HAP-1 (cell line): ENCODE measurements at regions of chr14 and their contacts with region 1.

Region 1: DNA sequence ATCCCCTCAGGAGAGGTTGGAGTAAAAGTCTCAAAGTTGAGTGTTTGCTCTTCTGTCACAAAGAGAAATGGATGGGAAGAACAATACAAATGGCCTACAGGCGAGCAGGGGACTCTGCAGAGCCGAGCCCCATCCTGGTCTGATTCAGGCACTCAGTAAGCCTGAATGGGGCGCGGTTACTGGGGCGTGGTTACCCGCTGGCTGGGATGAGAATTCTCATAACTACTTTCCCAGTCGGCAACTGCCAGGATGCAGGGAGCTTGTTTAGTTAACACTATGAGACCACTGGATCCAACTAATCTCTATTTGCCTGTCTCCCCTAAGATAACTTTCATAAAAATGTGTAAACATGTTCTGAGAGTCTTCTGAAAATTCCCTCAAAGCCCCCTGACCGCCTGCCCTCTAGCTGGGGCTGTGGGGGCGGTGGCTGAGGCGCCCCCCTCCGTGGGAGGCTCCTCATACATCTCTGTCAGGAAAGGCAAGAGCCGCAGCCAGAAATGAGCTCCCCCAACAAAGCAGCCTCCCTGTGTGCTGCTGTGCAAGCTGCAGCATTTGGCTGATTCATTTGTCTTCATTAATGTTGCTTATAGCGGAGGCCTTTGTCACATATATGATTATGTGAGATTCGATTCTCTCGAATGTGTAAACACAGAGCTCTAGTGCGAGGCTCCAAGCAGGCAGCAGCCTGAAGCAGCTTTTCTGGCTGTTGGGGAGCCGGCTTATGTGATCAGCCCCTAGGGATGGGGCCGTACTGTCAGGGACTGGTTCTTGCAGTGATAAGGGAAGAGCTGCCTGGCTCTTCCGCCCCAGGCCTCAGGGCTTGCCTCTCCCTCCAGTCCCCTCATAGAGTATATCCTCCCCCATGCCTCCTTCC is 126.1 kb upstream of the ARHGAP5 start:
- DNase-seq: peak; percentile 64 to 87
- H3K4me3 ChIP-seq: no peak overlapping the region
- H3K4me1 ChIP-seq: peaks cover 12% of the 10 kb centered on the region
- H3K27me3 ChIP-seq: no peaks in the 10 kb centered on the region

Region 2: GRCh38 chr14:31047503-31047902 is 903.5 kb before region 1 on chr14:
- in situ Hi-C with region 1: no loop called
- DNase-seq: no peak
- H3K4me3 ChIP-seq: no peak overlapping the region
- H3K4me1 ChIP-seq: peaks cover 12% of the 10 kb centered on the region
- H3K27me3 ChIP-seq: no peaks in the 10 kb centered on the region

Region 3: DNA sequence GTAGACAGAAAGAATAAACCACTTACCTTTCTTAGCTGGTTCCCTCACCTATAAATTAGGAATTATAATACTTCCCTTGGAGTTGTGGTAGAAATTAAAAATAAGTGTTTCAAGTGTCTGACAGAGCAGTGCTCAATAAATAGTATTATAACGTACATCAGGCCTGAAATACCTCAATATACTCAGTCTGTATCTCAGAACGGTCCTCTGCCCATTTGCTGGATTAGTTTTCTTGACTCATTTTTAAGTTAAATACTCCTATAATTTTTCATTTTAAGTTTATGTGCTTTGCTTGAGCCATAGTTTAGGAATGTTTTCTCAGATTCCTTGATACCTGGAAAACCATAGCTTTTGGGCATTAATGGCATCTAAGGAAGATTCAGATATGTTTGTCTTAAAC is 148.5 kb after region 1 on chr14:
- in situ Hi-C with region 1: no loop called
- DNase-seq: no peak
- H3K4me3 ChIP-seq: no peak overlapping the region
- H3K4me1 ChIP-seq: peaks cover 16% of the 10 kb centered on the region
- H3K27me3 ChIP-seq: no peaks in the 10 kb centered on the region

Region 4: GRCh38 chr14:32469388-32470160 is 518.6 kb after region 1 on chr14:
- in situ Hi-C with region 1: loop called (anchors 10 kb)
- DNase-seq: peak in 1 of 2 experiments; percentile 71
- H3K4me3 ChIP-seq: no peak overlapping the region
- H3K4me1 ChIP-seq: peaks cover 22% of the 10 kb centered on the region
- H3K27me3 ChIP-seq: no peaks in the 10 kb centered on the region